Endothelial cell of umbilical vein (primary cell): ENCODE measurements at regions of chr12 and their contacts with region 1.

Region 1: DNA sequence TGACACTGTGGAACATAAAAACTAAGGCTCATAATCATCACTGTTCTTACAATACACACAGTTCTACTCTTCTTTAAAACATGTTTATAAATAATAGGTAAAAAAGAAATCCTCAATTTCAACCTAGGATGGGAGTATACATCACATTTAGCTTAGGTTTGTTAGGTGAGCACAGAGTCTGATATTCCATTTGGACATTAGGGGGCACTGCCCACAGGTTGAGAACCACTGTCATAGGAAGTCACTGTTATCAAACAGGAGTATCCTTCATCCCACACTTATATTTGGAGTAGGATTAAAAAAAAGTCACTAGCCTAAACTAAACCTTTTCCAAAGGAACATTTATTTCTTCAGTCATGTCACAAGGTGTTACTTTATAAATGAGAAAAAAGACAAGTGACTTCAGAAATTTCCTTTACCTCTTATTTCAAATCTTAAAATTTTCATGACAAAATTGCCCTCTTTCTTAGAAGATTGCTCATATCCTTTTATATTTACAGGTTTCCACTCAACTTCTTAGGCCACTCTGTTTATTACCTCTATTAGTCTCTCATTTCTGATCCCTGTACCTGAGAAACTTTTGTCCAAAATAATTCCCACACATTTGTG is 240.6 kb downstream of the CPNE8 start:
- DNase-seq: peak; percentile 59
- H3K4me3 ChIP-seq: no peak overlapping the region
- H3K27ac ChIP-seq: no peak overlapping the region
- H3K4me1 ChIP-seq: no peaks in the 10 kb centered on the region
- H3K27me3 ChIP-seq: no peaks in the 10 kb centered on the region
- CTCF ChIP-seq: peak; percentile 35 to 61
- POLR2A ChIP-seq: no peak

Region 2: DNA sequence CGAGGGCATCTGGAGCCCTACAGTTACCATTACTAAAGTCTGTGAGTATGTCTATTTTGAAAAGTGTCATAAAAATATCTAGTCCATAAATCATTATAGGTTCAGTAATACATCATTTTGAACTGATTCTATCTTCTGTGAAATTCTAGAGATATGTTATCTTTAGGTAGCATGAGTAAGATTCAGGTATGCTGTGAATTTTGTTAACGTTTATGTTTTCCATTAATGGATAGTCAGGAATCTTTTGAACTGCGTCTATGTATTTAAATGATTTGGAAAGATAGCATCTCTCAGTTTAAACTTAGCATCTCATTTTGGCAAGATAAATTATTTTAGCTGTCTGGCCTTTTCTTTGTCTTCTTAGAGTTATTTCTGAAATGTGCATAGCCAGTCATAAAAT is 339.9 kb before region 1 on chr12:
- CTCF ChIA-PET with region 1: no interaction called
- POLR2A ChIA-PET with region 1: no interaction called
- dilution Hi-C with region 1: no loop called
- intact Hi-C with region 1: loop called (anchors 5 kb)
- DNase-seq: no peak
- H3K4me3 ChIP-seq: no peak overlapping the region
- H3K27ac ChIP-seq: no peak overlapping the region
- H3K4me1 ChIP-seq: no peaks in the 10 kb centered on the region
- H3K27me3 ChIP-seq: no peaks in the 10 kb centered on the region
- CTCF ChIP-seq: no peak
- POLR2A ChIP-seq: no peak

Region 3: DNA sequence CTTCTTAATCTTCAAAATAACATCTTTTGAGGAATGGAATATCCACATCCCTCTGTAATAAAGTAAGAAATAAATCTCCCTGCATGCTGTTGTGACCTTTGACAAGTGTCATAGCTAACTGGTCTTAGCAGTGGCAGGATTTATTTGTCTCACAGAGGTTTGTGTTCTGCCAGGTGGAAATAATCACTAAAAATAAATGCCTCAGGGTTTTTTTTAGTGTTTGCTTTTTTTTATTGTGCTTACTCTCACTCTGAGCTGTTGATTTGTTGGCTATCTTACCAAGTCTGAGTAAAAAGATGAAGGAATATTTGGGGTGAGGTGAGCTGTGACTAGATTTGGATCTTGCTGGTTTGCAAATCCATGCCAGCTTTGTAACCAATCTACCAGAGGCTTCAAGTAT is 62.8 kb before region 1 on chr12:
- CTCF ChIA-PET with region 1: no interaction called
- POLR2A ChIA-PET with region 1: no interaction called
- dilution Hi-C with region 1: no loop called
- intact Hi-C with region 1: no loop called
- DNase-seq: no peak
- H3K4me3 ChIP-seq: no peak overlapping the region
- H3K27ac ChIP-seq: no peak overlapping the region
- H3K4me1 ChIP-seq: no peaks in the 10 kb centered on the region
- H3K27me3 ChIP-seq: no peaks in the 10 kb centered on the region
- CTCF ChIP-seq: no peak
- POLR2A ChIP-seq: no peak

Region 4: GRCh38 chr12:38653650-38654049 is 11.1 kb before region 1 on chr12:
- CTCF ChIA-PET with region 1: interaction called, 14 read pairs
- POLR2A ChIA-PET with region 1: no interaction called
- dilution Hi-C with region 1: no loop called
- intact Hi-C with region 1: no loop called
- DNase-seq: no peak
- H3K4me3 ChIP-seq: no peak overlapping the region
- H3K27ac ChIP-seq: no peak overlapping the region
- H3K4me1 ChIP-seq: no peaks in the 10 kb centered on the region
- H3K27me3 ChIP-seq: no peaks in the 10 kb centered on the region
- CTCF ChIP-seq: no peak
- POLR2A ChIP-seq: no peak

Region 5: GRCh38 chr12:38682521-38682920 is 17.8 kb after region 1 on chr12:
- CTCF ChIA-PET with region 1: interaction called, 13 read pairs
- POLR2A ChIA-PET with region 1: no interaction called
- dilution Hi-C with region 1: no loop called
- intact Hi-C with region 1: no loop called
- DNase-seq: no peak
- H3K4me3 ChIP-seq: no peak overlapping the region
- H3K27ac ChIP-seq: no peak overlapping the region
- H3K4me1 ChIP-seq: no peaks in the 10 kb centered on the region
- H3K27me3 ChIP-seq: no peaks in the 10 kb centered on the region
- CTCF ChIP-seq: no peak
- POLR2A ChIP-seq: no peak

Region 6: DNA sequence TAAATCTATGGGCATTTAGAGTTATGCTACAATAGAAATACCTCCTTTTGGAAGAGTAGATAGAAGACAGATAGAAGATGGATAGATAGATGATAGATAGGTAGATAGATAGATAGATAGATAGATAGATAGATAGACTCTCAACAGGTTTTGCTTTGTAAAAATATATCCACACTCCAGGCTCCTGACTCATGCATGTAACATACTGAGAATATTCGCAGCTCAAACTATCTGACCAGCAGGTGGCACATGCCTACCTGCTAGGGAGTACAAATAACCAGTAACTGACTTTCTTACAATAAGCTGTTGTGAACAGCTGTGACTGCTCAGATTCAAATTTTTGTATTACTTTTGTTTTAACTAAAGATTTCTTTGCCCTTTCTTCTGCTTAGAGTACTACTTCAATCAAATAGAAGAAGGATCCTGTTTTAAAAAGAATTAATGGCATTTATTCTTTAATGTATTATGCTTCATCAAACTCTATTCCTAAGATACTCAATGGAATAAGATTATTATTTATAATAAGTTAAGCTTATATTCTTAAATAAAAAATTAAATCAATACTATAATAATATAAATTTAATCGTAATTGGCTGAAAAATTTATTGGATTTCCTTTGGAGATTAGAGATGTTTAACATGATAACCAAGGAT is 256.4 kb after region 1 on chr12:
- CTCF ChIA-PET with region 1: interaction called, 12 read pairs
- POLR2A ChIA-PET with region 1: no interaction called
- dilution Hi-C with region 1: no loop called
- intact Hi-C with region 1: no loop called
- DNase-seq: peak; percentile 68
- H3K4me3 ChIP-seq: no peak overlapping the region
- H3K27ac ChIP-seq: no peak overlapping the region
- H3K4me1 ChIP-seq: no peaks in the 10 kb centered on the region
- H3K27me3 ChIP-seq: no peaks in the 10 kb centered on the region
- CTCF ChIP-seq: peak; percentile 48 to 58
- POLR2A ChIP-seq: no peak

Region 7: DNA sequence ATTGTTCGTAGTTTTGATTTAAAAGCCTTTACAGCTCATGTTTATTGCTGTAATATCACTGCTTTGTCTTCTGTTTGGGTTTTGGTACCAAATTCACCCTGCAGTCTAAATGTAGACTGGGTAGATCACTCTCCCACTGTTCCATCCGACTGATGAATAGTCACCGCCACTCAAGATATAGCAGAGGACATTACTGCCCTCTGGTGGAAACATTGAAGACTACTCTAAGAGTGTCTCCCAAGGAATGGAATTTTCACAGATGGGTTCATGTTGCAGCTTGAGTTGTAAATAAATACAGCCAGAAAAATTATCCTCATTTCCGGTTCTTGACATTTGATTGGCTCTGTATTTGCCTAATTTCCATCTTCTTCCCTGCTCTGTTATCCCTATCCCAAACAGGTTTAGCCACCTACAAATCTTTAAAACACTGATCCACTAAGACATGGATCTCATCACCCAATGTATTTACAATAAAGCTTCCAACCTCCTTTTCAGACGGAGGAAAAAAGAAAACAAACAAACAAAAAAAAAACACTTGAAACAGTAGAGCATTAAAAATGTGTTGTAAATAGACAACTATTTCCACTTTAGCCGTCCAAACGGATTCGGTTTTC is 438.9 kb after region 1 on chr12:
- CTCF ChIA-PET with region 1: interaction called, 41 read pairs
- POLR2A ChIA-PET with region 1: no interaction called
- dilution Hi-C with region 1: no loop called
- intact Hi-C with region 1: loop called (anchors 1 kb)
- DNase-seq: peak; percentile 53
- H3K4me3 ChIP-seq: no peak overlapping the region
- H3K27ac ChIP-seq: no peak overlapping the region
- H3K4me1 ChIP-seq: no peaks in the 10 kb centered on the region
- H3K27me3 ChIP-seq: peaks cover 0 to 2% of the 10 kb centered on the region in 2 experiments
- CTCF ChIP-seq: peak; percentile 56 to 68
- POLR2A ChIP-seq: no peak